Tibial artery (tissue), 4 donors: ENCODE measurements at regions of chr22 and their contacts with region 1.

Region 1: DNA sequence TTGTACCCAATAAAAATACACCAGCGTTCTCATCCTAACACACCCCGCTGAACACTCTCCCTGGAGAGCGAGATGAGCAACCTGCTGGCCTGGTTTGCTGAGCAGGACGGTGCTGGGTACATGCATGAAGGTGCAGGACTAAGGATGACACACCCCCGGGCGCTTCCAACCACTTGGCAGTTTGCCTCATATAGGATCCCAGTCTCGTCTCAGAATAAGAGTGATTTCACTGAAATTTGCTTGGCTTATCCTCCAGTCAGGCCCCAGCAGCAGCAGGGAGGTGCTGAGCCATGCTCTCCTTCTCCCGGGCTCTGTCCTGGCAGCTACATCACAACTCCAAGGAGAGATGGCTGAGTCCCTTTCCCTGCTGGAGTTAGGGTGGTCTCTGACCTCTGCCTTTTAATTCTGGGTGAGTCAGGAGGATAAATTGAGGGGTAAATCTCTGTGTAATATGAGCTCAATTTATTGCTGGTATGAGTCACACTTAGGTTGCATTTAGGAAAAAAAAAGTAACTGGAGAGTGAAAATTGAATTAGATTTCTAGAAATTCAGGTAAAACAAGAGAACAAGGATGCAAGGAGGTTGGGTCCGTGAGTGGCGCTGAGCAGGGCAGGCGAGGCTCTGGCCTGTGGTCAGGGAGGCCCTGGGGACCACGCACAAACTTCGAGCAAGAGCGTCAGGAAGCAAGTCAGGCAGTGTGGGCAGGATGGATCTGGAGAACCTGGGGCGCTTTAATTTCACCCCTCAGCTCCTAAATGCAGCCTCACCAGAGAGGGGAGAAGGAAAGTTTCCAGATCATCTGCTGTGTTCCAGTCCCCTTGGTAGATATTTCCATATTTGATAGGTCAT is 974.0 kb downstream of the TBC1D22A start:
- DNase-seq: no peak
- H3K4me3 ChIP-seq: no peak overlapping the region
- H3K27ac ChIP-seq: no peak overlapping the region
- H3K4me1 ChIP-seq: no peaks in the 10 kb centered on the region
- H3K27me3 ChIP-seq: no peaks in the 10 kb centered on the region
- CTCF ChIP-seq: no peak

Region 2: DNA sequence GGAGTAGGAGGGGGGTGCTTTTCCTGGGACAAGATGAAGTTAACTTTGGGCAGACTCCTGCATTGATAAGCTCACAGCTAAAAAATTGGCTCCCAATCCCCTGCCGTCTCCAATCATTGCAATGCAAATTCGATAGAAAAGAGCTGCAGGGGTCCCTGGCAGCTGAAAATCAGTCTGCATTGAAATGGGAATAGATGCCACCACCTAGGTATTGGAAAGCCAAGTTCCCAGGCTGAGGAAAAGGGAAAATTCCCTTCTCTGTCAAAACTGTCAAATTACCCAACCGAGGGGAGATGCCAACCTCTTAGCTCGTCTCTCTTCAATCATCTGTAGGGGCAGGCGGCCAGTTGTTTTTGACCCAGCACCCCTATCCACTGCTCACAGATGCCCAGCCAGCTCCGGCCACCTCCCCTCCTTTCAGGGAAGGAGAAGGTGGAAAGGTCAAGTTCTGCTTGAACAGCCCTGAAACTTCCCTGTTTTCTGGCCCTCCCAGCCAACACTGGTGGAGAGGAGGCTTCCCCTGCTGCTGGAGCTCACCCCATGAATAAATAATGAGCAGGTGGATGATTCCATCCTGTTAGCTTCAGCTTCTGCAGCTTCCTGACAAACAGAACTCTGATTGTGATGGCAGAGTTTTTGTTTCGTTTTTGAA is 57.6 kb before region 1 on chr22:
- intact Hi-C with region 1: no loop called
- DNase-seq: no peak
- H3K4me3 ChIP-seq: no peak overlapping the region
- H3K27ac ChIP-seq: no peak overlapping the region
- H3K4me1 ChIP-seq: no peaks in the 10 kb centered on the region
- H3K27me3 ChIP-seq: no peaks in the 10 kb centered on the region
- CTCF ChIP-seq: no peak

Region 3: DNA sequence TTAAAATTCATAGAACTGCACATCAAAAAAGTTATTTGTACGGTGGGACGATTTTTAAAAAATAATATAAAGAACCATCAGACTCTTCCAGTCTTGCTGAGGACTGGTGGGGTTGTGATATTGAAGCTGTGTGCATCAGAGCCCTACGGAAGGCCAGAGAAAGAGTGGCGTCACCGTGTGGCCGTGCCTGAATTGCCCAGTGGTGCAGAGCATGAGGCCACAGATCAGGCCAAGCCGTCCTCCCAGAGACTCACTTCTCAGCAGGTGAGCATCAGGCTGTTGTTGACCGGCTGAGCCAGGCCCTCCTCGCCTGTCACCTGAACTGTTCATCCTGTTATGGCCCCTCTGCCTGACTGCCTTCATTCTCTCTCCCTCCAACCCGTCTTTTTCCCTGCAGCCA is 39.9 kb after region 1 on chr22:
- intact Hi-C with region 1: no loop called
- DNase-seq: no peak
- H3K4me3 ChIP-seq: no peak overlapping the region
- H3K27ac ChIP-seq: no peak overlapping the region
- H3K4me1 ChIP-seq: no peaks in the 10 kb centered on the region
- H3K27me3 ChIP-seq: no peaks in the 10 kb centered on the region
- CTCF ChIP-seq: no peak

Region 4: DNA sequence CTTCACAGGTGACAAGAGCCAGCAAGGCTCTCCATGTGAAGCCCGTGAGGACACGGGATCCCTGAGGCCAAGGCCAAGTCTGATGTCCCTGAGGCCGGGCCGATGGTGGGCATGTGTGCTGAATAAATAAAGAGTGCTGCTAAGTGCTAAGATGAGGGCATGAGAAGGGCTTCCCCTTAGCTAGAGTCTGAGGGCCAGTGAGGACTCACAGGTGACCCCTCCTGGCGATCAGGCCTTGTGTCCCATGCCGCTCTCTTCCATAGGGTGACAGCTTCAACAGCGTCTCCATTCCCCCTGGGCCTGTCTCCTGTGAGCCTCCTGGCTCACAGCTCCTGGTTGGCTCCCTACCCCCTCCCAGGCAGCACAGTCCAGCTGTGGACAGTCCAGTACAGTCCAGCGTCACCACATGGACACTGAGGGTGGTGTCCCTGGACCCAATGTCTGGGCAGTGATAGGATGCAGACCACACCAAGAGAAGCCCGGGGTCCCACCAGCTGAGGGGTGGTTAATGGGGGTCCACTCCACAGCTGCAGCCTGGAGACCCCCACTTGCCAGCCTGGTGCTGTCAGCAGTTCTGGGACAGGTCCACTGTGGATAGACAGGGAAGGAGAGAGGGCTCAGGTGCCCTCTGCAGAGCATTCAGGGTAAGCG is 59.2 kb after region 1 on chr22:
- intact Hi-C with region 1: loop called (anchors 10 kb)
- DNase-seq: no peak
- H3K4me3 ChIP-seq: no peak overlapping the region
- H3K27ac ChIP-seq: no peak overlapping the region
- H3K4me1 ChIP-seq: no peaks in the 10 kb centered on the region
- H3K27me3 ChIP-seq: no peaks in the 10 kb centered on the region
- CTCF ChIP-seq: no peak

Region 5: DNA sequence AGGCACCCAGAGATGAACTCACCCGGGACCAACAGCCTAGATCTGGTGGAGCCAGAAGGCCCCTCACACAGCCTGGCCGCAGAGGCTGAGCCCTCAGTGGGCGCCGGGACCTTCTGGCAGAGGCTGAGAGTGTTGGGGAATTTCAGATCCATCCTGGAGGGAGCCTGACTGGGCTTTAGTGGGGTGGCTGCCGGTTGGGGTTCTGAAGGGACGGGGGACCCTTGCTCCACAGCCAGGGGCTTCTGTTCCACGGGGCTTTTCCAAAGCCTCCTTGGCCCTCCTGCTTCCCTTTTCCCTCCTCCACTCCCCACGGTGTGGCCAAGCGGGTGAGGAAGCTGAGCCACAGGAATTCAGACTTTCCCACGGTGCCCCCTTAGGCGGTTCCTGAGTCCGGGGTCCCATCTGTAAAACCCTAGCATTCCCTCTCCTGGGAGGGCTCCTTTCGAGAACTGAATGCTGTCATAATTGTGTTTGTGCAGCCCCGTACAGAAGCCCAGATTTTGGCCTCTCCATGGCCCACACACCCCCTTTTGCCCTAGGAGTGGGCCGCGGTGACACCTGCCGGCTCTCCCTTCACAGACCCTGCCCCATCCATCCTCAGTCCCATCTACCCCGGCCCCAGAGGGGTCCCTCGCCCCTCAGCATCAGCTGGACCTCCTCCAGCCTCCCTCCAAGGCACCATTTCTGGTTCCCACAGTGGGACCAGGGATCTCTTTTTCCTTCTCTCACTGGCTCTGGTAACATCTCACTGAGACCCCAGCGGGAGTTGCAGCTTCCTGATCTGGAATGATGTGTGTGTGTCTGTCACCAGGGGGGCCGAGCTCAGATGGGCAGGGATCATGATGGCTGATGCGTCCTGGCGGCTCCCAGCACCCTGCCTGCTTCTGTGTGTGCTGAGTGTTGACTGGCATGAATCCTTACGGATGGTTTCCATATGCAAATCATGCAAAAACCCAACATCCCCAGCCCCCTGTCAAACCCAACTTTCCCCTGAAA is 74.4 kb after region 1 on chr22:
- intact Hi-C with region 1: no loop called
- DNase-seq: no peak
- H3K4me3 ChIP-seq: no peak overlapping the region
- H3K27ac ChIP-seq: no peak overlapping the region
- H3K4me1 ChIP-seq: no peaks in the 10 kb centered on the region
- H3K27me3 ChIP-seq: peaks cover 0 to 4% of the 10 kb centered on the region in 2 donors
- CTCF ChIP-seq: no peak